ENCODE measurements at regions of chr14 and their contacts with region 1.

Region 1: GRCh38 chr14:58239244-58240195 is 5.1 kb upstream of the PSMA3 start:
- DNase-seq: peak; percentile 63 to 91 (median 83)
- ATAC-seq: peak; percentile 24
- H3K4me3 ChIP-seq: peak overlapping the region; percentile 57 to 81
- H3K4me3 Mint-ChIP-seq: no peak overlapping the region
- H3K27ac ChIP-seq: peak overlapping the region; percentile 59 to 77
- H3K27ac Mint-ChIP-seq: no peak overlapping the region
- H3K4me1 ChIP-seq: peaks cover 10% of the 10 kb centered on the region
- H3K4me1 Mint-ChIP-seq: peaks cover 22% of the 10 kb centered on the region
- H3K27me3 ChIP-seq: no peaks in the 10 kb centered on the region
- H3K27me3 Mint-ChIP-seq: no peaks in the 10 kb centered on the region
- CTCF ChIP-seq: no peak

Region 2: DNA sequence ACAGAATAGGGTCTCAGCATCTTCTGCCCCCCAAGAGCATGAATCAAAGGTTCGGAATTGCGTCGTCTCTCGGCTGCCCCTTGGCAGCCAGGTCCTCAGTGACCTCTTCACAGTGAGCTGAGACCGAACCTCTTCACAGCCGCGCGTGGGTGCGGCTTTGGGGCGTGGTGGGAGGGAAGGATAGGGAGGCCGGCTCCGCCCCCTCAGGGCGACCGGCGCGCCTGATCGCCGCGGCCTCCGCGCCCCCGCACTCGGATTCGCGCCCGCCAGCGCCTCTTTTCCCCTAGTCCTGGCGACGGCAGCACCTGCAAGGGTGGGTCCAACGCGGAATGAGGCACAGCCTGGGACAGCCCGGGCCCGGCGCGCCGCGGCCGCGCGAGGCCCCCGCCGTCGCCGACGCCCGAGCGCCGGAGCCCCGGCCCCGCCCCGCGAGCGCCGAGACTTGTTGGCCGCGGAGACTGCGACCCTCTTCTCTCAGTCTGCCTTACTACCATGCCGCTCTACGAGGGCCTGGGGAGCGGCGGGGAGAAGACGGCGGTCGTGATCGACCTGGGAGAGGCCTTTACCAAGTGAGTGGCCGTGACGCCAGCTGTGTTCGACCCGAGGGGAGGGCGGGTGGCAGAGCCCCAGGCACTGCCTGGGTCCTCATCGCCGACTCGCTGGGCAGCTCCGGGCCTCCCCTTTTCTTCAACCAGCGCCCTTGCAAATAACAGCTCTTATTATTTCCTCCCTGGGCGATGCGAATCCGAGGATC is 39.6 kb before region 1 on chr14 and contains the start of gene ACTR10:
- CTCF ChIA-PET with region 1: interaction called, 4 read pairs
- POLR2A ChIA-PET with region 1: interaction called, 10 read pairs
- intact Hi-C with region 1: loop called (anchors 1 to 2 kb)
- DNase-seq: peak; percentile 76 to 95 (median 85)
- ATAC-seq: peak; percentile 87
- H3K4me3 ChIP-seq: peak within 1 kb of the TSS; percentile 75 to 92
- H3K4me3 Mint-ChIP-seq: peak within 1 kb of the TSS; percentile 94
- H3K27ac ChIP-seq: peak within 1 kb of the TSS; percentile 86 to 87
- H3K27ac Mint-ChIP-seq: peak within 1 kb of the TSS; percentile 98
- H3K4me1 ChIP-seq: peaks cover 25% of the 10 kb centered on the region
- H3K4me1 Mint-ChIP-seq: peaks cover 46% of the 10 kb centered on the region
- H3K27me3 ChIP-seq: no peaks in the 10 kb centered on the region
- H3K27me3 Mint-ChIP-seq: no peaks in the 10 kb centered on the region
- CTCF ChIP-seq: no peak
- total RNA-seq, gene ACTR10: 47.5 to 47.7 TPM

Region 3: GRCh38 chr14:58395812-58396788 is 156.6 kb after region 1 on chr14 and contains the start of gene TOMM20L:
- CTCF ChIA-PET with region 1: interaction called, 3 read pairs
- POLR2A ChIA-PET with region 1: interaction called, 3 read pairs
- intact Hi-C with region 1: loop called in 1 of 2 experiments (anchors 10 kb)
- DNase-seq: peak; percentile 48 to 86 (median 69)
- ATAC-seq: peak; percentile 81
- H3K4me3 ChIP-seq: peak within 1 kb of the TSS; percentile 27 to 59
- H3K4me3 Mint-ChIP-seq: peak within 1 kb of the TSS; percentile 84
- H3K27ac ChIP-seq: peak within 1 kb of the TSS; percentile 69 to 75
- H3K27ac Mint-ChIP-seq: peak within 1 kb of the TSS; percentile 93
- H3K4me1 ChIP-seq: peaks cover 9% of the 10 kb centered on the region
- H3K4me1 Mint-ChIP-seq: peaks cover 13% of the 10 kb centered on the region
- H3K27me3 ChIP-seq: no peaks in the 10 kb centered on the region
- H3K27me3 Mint-ChIP-seq: no peaks in the 10 kb centered on the region
- CTCF ChIP-seq: peak; percentile 94
- total RNA-seq, gene TOMM20L: 0.92 TPM in 1 of 2 experiments, not detected in the other

Region 4: DNA sequence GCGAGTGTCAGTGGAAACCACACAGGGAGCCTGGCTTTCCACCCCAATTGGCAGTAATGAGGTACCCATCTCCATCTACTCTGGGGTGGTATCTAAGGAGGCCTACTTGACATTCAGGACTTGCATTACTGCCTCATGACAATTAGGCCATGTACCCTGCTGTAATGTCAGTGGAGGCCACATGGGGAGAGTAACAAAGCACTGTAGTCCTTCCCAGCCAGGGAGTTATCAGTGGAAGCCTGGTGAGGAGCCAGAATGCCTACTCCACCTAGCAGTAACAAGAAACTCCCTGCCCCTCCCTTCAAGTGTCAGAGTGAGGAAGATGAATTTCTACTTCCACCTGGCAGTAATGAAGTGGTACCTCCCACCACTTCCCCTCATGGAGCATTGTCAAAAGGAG is 175.3 kb after region 1 on chr14:
- CTCF ChIA-PET with region 1: no interaction called
- POLR2A ChIA-PET with region 1: no interaction called
- intact Hi-C with region 1: no loop called
- DNase-seq: no peak
- ATAC-seq: no peak
- H3K4me3 ChIP-seq: no peak overlapping the region
- H3K4me3 Mint-ChIP-seq: no peak overlapping the region
- H3K27ac ChIP-seq: no peak overlapping the region
- H3K27ac Mint-ChIP-seq: no peak overlapping the region
- H3K4me1 ChIP-seq: no peaks in the 10 kb centered on the region
- H3K4me1 Mint-ChIP-seq: peaks cover 24% of the 10 kb centered on the region
- H3K27me3 ChIP-seq: no peaks in the 10 kb centered on the region
- H3K27me3 Mint-ChIP-seq: no peaks in the 10 kb centered on the region
- CTCF ChIP-seq: no peak